Ovary (tissue), 10 donors: ENCODE measurements at regions of chr16 and their contacts with region 1.

Region 1: GRCh38 chr16:6047325-6047724 is 949.7 kb upstream of the EEF2KMT start:
- DNase-seq: no peak
- H3K4me3 ChIP-seq: no peak overlapping the region
- H3K27ac ChIP-seq: no peak overlapping the region
- H3K4me1 ChIP-seq: no peaks in the 10 kb centered on the region
- H3K27me3 ChIP-seq: no peaks in the 10 kb centered on the region
- CTCF ChIP-seq: no peak
- EP300 ChIP-seq: no peak
- POLR2A ChIP-seq: no peak

Region 2: GRCh38 chr16:5979905-5980550 is 67.3 kb before region 1 on chr16:
- intact Hi-C with region 1: loop called in 1 of 4 experiments (anchors 10 kb)
- DNase-seq: no peak
- H3K4me3 ChIP-seq: no peak overlapping the region
- H3K27ac ChIP-seq: no peak overlapping the region
- H3K4me1 ChIP-seq: no peaks in the 10 kb centered on the region
- H3K27me3 ChIP-seq: no peaks in the 10 kb centered on the region
- CTCF ChIP-seq: no peak
- EP300 ChIP-seq: no peak
- POLR2A ChIP-seq: no peak